CD8-positive, alpha-beta memory T cell (primary cell): ENCODE measurements at regions of chr10 and their contacts with region 1.

Region 1: GRCh38 chr10:74213571-74214162 is 62.6 kb downstream of the ADK start:
- DNase-seq: peak in 4 of 5 donors; percentile 18 to 67 (median 29)
- H3K4me3 ChIP-seq: no peak overlapping the region
- H3K4me3 Mint-ChIP-seq: no peak overlapping the region
- H3K27ac ChIP-seq: no peak overlapping the region
- H3K27ac Mint-ChIP-seq: peak overlapping the region in 4 of 8 donors; percentile 9 to 79 (median 32)
- H3K4me1 ChIP-seq: no peaks in the 10 kb centered on the region
- H3K4me1 Mint-ChIP-seq: peaks cover 17 to 36% (median 32%) of the 10 kb centered on the region in 3 donors
- H3K27me3 ChIP-seq: no peaks in the 10 kb centered on the region
- H3K27me3 Mint-ChIP-seq: no peaks in the 10 kb centered on the region

Region 2: DNA sequence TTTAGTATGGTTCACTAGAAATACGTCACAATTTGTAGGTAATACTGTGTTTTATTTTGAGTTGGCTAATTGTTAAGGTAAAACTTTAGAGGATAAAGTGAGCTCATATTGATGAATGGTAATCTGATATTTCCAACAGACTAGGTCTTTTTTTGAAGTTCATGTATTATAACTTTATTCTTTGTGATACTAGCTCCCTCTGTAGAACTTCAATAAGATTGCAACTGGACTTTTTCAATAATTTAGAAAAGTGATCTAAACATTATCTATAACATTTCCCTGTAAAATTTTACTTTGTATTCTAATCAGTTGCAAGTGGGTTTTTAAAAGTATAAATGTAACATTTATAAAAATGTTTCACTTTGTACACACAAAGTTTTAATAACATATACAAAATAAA is 20.9 kb after region 1 on chr10:
- CTCF ChIA-PET with region 1: interaction called, 12 read pairs
- POLR2A ChIA-PET with region 1: no interaction called
- DNase-seq: peak in 2 of 5 donors; percentile 16 to 17
- H3K4me3 ChIP-seq: no peak overlapping the region
- H3K4me3 Mint-ChIP-seq: no peak overlapping the region
- H3K27ac ChIP-seq: no peak overlapping the region
- H3K27ac Mint-ChIP-seq: no peak overlapping the region
- H3K4me1 ChIP-seq: no peaks in the 10 kb centered on the region
- H3K4me1 Mint-ChIP-seq: peaks cover 8 to 35% (median 21%) of the 10 kb centered on the region in 3 donors
- H3K27me3 ChIP-seq: no peaks in the 10 kb centered on the region
- H3K27me3 Mint-ChIP-seq: no peaks in the 10 kb centered on the region